Panc1 (cell line): ENCODE measurements at regions of chr3 and their contacts with region 1.

Region 1: GRCh38 chr3:158845765-158846350 is 44.0 kb downstream of the MFSD1 start:
- DNase-seq: no peak
- ATAC-seq: peak; percentile 65
- H3K4me3 ChIP-seq: no peak overlapping the region
- H3K27ac ChIP-seq: no peak overlapping the region
- H3K4me1 ChIP-seq: no peaks in the 10 kb centered on the region
- H3K27me3 ChIP-seq: peaks cover 2% of the 10 kb centered on the region; the same call in 1 of the 2 replicates
- CTCF ChIP-seq: peak; percentile 90

Region 2: DNA sequence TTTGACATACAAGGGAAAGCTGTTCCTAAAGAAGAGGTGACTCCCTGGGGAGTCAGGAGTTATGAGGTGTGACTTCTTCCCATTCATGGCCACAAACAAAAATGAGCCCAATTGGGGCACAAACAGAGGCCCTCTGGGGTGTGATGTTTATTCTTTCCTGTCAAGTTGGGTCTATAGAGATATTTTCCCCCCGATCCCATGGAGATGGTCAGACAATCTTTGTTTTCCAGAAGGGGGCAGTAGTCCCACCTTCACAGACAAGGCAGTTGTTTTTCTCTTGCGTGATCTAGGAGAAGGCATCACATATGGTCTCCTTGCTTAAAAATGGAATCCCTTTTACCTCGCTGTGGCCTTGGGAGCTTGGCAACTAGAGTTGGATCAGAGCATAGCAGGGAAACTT is 66.3 kb after region 1 on chr3:
- CTCF ChIA-PET with region 1: no interaction called
- POLR2A ChIA-PET with region 1: no interaction called
- in situ Hi-C with region 1: no loop called
- intact Hi-C with region 1: loop called (anchors 5 kb)
- DNase-seq: no peak
- ATAC-seq: no peak
- H3K4me3 ChIP-seq: no peak overlapping the region
- H3K27ac ChIP-seq: no peak overlapping the region
- H3K4me1 ChIP-seq: no peaks in the 10 kb centered on the region
- H3K27me3 ChIP-seq: 0 out of 2 replicates have a peak, but pooled peaks cover 3% of the 10 kb centered on the region
- CTCF ChIP-seq: peak; percentile 34

Region 3: DNA sequence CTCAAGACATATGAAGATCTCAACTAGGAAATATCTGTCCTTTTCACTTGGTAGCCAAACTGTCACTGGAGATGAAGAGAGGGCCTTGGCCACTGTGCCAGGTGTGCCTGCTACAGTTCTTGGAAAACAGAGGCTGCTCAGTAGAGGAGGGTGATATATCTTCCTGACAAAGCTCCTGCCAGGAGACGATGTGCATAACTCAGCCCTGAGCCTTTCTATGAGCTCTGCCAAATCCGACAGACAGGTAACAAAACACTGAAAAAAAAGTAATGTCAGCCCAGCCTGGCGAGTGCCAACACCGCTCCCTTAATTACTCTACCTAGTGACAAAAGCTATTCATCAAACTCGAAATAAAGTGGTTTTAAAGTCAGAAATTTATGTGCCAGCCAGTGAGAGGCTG is 79.2 kb after region 1 on chr3:
- CTCF ChIA-PET with region 1: no interaction called
- POLR2A ChIA-PET with region 1: no interaction called
- in situ Hi-C with region 1: no loop called
- intact Hi-C with region 1: no loop called
- DNase-seq: no peak
- ATAC-seq: no peak
- H3K4me3 ChIP-seq: no peak overlapping the region
- H3K27ac ChIP-seq: no peak overlapping the region
- H3K4me1 ChIP-seq: no peaks in the 10 kb centered on the region
- H3K27me3 ChIP-seq: 0 out of 2 replicates have a peak, but pooled peaks cover 2% of the 10 kb centered on the region
- CTCF ChIP-seq: no peak

Region 4: GRCh38 chr3:159252772-159253384 is 407.0 kb after region 1 on chr3:
- CTCF ChIA-PET with region 1: interaction called, 4 read pairs
- POLR2A ChIA-PET with region 1: no interaction called
- in situ Hi-C with region 1: no loop called
- intact Hi-C with region 1: loop called (anchors 2 kb)
- DNase-seq: peak; percentile 35
- ATAC-seq: no peak
- H3K4me3 ChIP-seq: no peak overlapping the region
- H3K27ac ChIP-seq: no peak overlapping the region
- H3K4me1 ChIP-seq: no peaks in the 10 kb centered on the region
- H3K27me3 ChIP-seq: no peaks in the 10 kb centered on the region
- CTCF ChIP-seq: peak; percentile 70; the same call in 1 of the 2 replicates

Region 5: DNA sequence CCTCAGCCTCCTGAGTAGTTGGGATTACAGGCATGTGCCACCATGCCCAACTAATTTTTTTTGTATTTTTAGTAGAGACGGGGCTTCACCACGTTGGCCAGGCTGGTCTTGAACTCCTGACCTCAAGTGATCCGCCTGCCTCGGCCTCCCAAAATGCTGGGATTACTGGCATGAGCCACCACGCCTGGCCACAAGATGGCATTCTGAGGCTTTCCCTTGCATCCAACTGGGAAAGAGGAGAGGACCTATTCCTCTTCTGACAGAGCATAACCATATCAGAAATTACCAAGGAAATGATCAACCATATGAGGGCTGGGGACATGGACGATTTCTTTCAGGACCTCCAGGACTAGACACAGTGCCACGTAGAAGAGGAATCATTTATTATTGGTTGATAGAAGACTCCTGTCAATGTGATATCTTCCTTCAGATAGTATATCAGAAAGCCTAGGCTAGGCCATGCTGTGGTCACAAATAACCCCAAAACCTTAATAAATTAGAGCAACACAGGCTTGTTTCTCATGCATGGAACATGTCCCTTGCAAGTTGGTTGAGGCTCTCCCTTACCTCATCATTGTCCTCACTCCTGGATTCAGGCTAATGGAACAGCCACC is 770.5 kb after region 1 on chr3:
- CTCF ChIA-PET with region 1: no interaction called
- POLR2A ChIA-PET with region 1: no interaction called
- in situ Hi-C with region 1: no loop called
- intact Hi-C with region 1: loop called (anchors 10 kb)
- DNase-seq: no peak
- ATAC-seq: peak; percentile 75
- H3K4me3 ChIP-seq: no peak overlapping the region
- H3K27ac ChIP-seq: no peak overlapping the region
- H3K4me1 ChIP-seq: peaks cover 26% of the 10 kb centered on the region
- H3K27me3 ChIP-seq: no peaks in the 10 kb centered on the region
- CTCF ChIP-seq: peak; percentile 86